Activated CD4-positive, alpha-beta T cell treated with anti-CD3 and anti-CD28 coated beads for 36 hours (primary cell): ENCODE measurements at regions of chr7 and their contacts with region 1.

Region 1: DNA sequence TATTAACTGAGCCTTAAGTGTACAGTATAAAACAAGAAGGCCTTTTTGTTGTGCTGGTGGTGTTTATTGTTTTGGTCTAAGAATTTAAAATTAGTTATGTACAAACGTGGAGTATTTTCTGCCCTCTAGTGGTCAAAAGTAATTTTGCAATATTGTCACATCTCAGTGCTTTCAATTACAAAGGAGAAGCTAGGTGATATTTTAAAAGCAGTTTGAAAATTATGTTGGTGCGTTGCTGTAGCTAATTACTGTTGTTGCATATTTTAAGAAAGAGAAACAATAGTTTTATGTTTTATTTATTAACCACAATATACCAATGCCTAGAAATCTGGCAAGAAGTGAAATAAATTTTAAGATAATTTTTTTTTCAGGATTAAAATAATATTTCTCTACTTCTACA is 11.4 kb downstream of the NPVF start:
- DNase-seq: no peak
- ATAC-seq: no peak
- H3K4me3 Mint-ChIP-seq: no peak overlapping the region
- H3K27ac Mint-ChIP-seq: no peak overlapping the region
- H3K4me1 Mint-ChIP-seq: no peaks in the 10 kb centered on the region
- H3K27me3 Mint-ChIP-seq: peaks cover 13% of the 10 kb centered on the region

Region 2: DNA sequence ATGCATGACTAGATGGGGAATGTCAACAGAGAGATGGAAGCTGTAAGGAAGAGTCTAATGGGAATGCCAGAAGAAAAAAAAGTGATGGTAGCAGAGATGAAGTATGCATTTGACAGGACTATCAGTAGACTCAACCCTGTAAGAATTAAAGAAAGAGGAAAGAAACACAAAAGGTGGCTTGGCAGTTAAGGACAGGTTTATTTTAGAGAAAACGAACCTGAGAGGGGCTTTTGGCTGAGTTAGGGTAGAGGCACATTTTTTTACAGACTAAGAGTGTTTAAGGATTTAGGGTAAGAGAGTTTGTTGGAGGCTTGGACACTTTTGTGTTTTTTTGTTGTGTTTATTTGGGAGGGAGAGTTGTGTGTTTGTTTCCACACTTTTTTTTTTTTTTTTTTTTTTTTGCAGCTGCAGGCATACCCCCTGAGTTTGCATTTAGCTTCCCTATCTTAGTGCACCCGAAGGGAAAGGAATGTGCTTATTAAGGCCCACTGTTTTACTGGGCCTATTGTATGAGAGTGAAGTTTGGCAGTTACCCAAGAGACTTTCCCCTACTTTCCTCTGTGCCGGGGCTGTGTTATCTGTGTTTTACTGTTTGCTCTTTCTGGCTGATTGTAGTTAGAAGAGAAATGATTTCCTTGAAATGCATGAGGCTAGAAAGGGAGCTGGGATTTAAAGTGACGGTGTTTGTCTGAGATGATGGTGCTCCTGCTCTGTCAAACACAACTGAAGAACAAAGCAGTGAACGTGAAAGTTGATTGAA is 20.5 kb before region 1 on chr7:
- CTCF ChIA-PET with region 1: interaction called, 12 read pairs
- POLR2A ChIA-PET with region 1: no interaction called
- intact Hi-C with region 1: no loop called
- DNase-seq: no peak
- ATAC-seq: no peak
- H3K4me3 Mint-ChIP-seq: no peak overlapping the region
- H3K27ac Mint-ChIP-seq: no peak overlapping the region
- H3K4me1 Mint-ChIP-seq: no peaks in the 10 kb centered on the region
- H3K27me3 Mint-ChIP-seq: peaks cover 2% of the 10 kb centered on the region

Region 3: DNA sequence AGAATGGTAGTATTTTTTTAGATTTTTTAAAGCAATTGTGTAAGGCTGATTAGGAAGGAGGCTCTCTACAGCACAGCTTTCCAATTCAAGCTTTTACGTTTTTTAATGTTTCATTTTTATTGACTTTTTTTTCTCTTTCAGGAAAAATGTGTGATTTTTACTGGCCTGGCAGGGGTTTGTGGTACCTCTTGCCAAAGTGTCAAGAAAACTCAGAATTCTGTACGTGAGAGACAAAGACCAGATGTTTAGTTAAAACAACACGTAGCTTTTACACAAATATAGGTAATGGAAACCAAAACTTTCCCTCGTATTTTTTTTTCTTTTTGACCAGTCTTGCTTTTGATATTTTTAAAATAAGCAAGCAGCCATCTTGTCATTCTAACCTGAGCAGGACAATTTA is 17.5 kb after region 1 on chr7:
- CTCF ChIA-PET with region 1: interaction called, 11 read pairs
- POLR2A ChIA-PET with region 1: no interaction called
- intact Hi-C with region 1: no loop called
- DNase-seq: no peak
- ATAC-seq: no peak
- H3K4me3 Mint-ChIP-seq: no peak overlapping the region
- H3K27ac Mint-ChIP-seq: no peak overlapping the region
- H3K4me1 Mint-ChIP-seq: no peaks in the 10 kb centered on the region
- H3K27me3 Mint-ChIP-seq: peaks cover 12% of the 10 kb centered on the region

Region 4: GRCh38 chr7:25578991-25579777 is 362.3 kb after region 1 on chr7:
- CTCF ChIA-PET with region 1: no interaction called
- POLR2A ChIA-PET with region 1: no interaction called
- intact Hi-C with region 1: no loop called
- DNase-seq: no peak
- ATAC-seq: no peak
- H3K4me3 Mint-ChIP-seq: no peak overlapping the region
- H3K27ac Mint-ChIP-seq: no peak overlapping the region
- H3K4me1 Mint-ChIP-seq: no peaks in the 10 kb centered on the region
- H3K27me3 Mint-ChIP-seq: peaks cover 3% of the 10 kb centered on the region